ENCODE measurements at regions of chr18 and their contacts with region 1.

Region 1: GRCh38 chr18:22485808-22486244 is 68.1 kb upstream of the CTAGE1 start:
- DNase-seq: no peak
- H3K4me3 ChIP-seq: no peak overlapping the region
- H3K27ac ChIP-seq: no peak overlapping the region
- H3K4me1 ChIP-seq: peaks cover 0 to 10% of the 10 kb centered on the region in 2 donors
- H3K27me3 ChIP-seq: no peaks in the 10 kb centered on the region
- CTCF ChIP-seq: no peak

Region 2: DNA sequence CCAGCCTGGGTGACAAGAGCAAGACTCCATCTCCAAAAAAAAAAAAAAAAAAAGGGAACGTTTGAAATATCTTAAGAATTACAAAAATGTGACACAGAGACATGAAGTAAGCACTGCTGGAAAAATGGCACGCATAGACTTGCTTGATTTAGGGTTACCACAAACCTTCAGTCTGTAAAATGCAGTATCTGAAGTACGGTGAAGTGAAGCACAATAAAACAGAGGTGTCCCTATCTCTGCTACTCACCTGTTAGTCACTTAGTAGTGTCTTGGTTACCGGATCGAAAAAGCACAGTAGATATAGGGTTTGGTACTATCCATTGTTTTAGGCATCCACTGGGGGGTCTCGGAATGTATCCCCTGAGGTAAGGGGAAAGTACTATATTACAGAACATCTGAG is 1255.4 kb before region 1 on chr18:
- intact Hi-C with region 1: no loop called
- DNase-seq: no peak
- H3K4me3 ChIP-seq: no peak overlapping the region
- H3K27ac ChIP-seq: no peak overlapping the region
- H3K4me1 ChIP-seq: no peaks in the 10 kb centered on the region
- H3K27me3 ChIP-seq: no peaks in the 10 kb centered on the region
- CTCF ChIP-seq: no peak

Region 3: DNA sequence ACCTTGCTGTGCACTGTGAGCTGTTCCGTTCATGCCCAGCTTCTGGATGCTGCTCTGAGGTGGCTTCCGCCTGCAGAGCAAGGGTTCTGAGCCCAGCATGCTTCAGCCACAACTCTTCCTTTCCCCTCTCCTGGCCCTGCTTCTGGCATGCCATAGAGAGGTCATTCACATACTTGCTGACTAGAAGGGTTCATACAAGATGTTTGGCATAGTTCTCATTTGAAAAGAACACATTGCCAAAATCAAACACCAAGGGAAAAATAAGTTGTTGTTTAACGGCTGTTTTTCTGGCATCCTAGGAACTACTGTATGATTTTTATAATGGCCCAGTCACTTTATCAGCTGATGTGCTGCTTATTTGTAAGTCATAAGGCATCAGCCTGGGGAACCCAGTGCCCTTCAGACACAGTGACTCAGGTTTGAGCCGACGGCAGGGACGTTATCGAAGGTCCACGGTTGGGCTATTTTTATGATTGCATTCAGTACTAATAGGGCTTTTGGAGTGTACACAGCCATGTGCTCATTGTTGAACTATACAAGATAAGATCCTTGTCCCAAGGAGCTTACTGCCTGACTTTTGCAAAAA is 14.2 kb before region 1 on chr18:
- intact Hi-C with region 1: loop called (anchors 1 kb)
- DNase-seq: peak; percentile 47 to 81
- H3K4me3 ChIP-seq: peak overlapping the region in 1 of 2 donors; percentile 38
- H3K27ac ChIP-seq: peak overlapping the region; percentile 76 to 80
- H3K4me1 ChIP-seq: peaks cover 19 to 25% of the 10 kb centered on the region in 2 donors
- H3K27me3 ChIP-seq: no peaks in the 10 kb centered on the region
- CTCF ChIP-seq: no peak

Region 4: GRCh38 chr18:22542401-22542835 is 56.6 kb after region 1 on chr18:
- intact Hi-C with region 1: loop called (anchors 5 kb)
- DNase-seq: peak in 1 of 2 donors; percentile 77
- H3K4me3 ChIP-seq: no peak overlapping the region
- H3K27ac ChIP-seq: peak overlapping the region; percentile 62 to 65
- H3K4me1 ChIP-seq: peaks cover 11 to 44% of the 10 kb centered on the region in 2 donors
- H3K27me3 ChIP-seq: no peaks in the 10 kb centered on the region
- CTCF ChIP-seq: no peak

Region 5: GRCh38 chr18:23250893-23251656 is 765.2 kb after region 1 on chr18:
- intact Hi-C with region 1: no loop called
- DNase-seq: peak in 1 of 2 donors; percentile 87
- H3K4me3 ChIP-seq: no peak overlapping the region
- H3K27ac ChIP-seq: peak overlapping the region; percentile 63 to 69
- H3K4me1 ChIP-seq: peaks cover 0 to 12% of the 10 kb centered on the region in 2 donors
- H3K27me3 ChIP-seq: no peaks in the 10 kb centered on the region
- CTCF ChIP-seq: no peak